GM12878 (cell line): ENCODE measurements at regions of chr5 and their contacts with region 1.

Region 1: DNA sequence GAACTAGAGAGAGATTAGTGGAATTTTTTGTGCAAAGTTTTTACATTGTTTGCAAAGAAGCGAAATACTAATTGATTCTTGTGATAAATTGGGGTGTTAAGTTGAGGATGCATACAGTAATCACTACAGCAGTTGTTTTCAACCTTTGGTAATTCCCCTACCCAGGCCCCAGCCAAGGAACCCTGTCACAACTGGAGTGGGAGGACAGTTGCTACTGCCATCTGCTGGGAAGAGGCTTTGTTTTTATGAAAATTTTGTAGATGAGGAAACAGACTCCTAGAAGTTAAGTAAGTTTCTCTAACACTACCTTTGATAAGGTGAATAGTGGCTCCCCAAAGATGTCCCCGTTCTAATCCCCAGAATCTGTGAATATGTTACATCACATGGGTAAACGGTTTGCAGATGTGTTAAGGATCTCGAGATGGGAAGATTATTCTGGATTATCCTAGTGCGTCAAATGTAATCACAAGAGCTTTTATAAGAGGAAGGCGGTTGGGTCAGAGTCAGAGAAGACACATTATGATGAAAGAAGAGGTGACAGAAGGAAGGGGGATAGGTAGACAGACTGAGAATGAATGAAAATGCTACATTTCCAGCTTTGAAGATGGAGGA is 34.0 kb upstream of the PPP1R2B start:
- DNase-seq: no peak
- ATAC-seq: peak; percentile 79
- H3K4me3 ChIP-seq: no peak overlapping the region
- H3K27ac ChIP-seq: no peak overlapping the region
- H3K4me1 ChIP-seq: peaks cover 7% of the 10 kb centered on the region; the same call in 1 of the 2 replicates
- H3K27me3 ChIP-seq: no peaks in the 10 kb centered on the region
- CTCF ChIP-seq: peak; percentile 50 to 71 (median 53)
- EP300 ChIP-seq: no peak
- POLR2A ChIP-seq: no peak
- RAD21 ChIP-seq: peak; percentile 85

Region 2: GRCh38 chr5:156675395-156675794 is 140.7 kb before region 1 on chr5:
- CTCF ChIA-PET with region 1: interaction called, 3 read pairs
- POLR2A ChIA-PET with region 1: no interaction called
- RAD21 ChIA-PET with region 1: no interaction called
- SMC1A ChIA-PET with region 1: no interaction called
- in situ Hi-C with region 1: no loop called
- intact Hi-C with region 1: loop called (anchors 10 kb)
- DNase-seq: no peak
- ATAC-seq: no peak
- H3K4me3 ChIP-seq: no peak overlapping the region
- H3K27ac ChIP-seq: no peak overlapping the region
- H3K4me1 ChIP-seq: no peaks in the 10 kb centered on the region
- H3K27me3 ChIP-seq: no peaks in the 10 kb centered on the region
- CTCF ChIP-seq: no peak
- EP300 ChIP-seq: no peak
- POLR2A ChIP-seq: no peak
- RAD21 ChIP-seq: no peak

Region 3: GRCh38 chr5:156764176-156764575 is 51.9 kb before region 1 on chr5:
- CTCF ChIA-PET with region 1: no interaction called
- POLR2A ChIA-PET with region 1: no interaction called
- RAD21 ChIA-PET with region 1: no interaction called
- SMC1A ChIA-PET with region 1: no interaction called
- in situ Hi-C with region 1: no loop called
- intact Hi-C with region 1: no loop called
- DNase-seq: no peak
- ATAC-seq: no peak
- H3K4me3 ChIP-seq: no peak overlapping the region
- H3K27ac ChIP-seq: no peak overlapping the region
- H3K4me1 ChIP-seq: no peaks in the 10 kb centered on the region
- H3K27me3 ChIP-seq: no peaks in the 10 kb centered on the region
- CTCF ChIP-seq: no peak
- EP300 ChIP-seq: no peak
- POLR2A ChIP-seq: no peak
- RAD21 ChIP-seq: no peak